Right ventricle myocardium superior (tissue), 1 donor: ENCODE measurements at regions of chr12 and their contacts with region 1.

Region 1: GRCh38 chr12:48851883-48852733 is at the start of gene DDX23:
- DNase-seq: peak; percentile 97
- ATAC-seq: peak; percentile 99
- total RNA-seq, gene DDX23: 32.4 TPM

Region 2: DNA sequence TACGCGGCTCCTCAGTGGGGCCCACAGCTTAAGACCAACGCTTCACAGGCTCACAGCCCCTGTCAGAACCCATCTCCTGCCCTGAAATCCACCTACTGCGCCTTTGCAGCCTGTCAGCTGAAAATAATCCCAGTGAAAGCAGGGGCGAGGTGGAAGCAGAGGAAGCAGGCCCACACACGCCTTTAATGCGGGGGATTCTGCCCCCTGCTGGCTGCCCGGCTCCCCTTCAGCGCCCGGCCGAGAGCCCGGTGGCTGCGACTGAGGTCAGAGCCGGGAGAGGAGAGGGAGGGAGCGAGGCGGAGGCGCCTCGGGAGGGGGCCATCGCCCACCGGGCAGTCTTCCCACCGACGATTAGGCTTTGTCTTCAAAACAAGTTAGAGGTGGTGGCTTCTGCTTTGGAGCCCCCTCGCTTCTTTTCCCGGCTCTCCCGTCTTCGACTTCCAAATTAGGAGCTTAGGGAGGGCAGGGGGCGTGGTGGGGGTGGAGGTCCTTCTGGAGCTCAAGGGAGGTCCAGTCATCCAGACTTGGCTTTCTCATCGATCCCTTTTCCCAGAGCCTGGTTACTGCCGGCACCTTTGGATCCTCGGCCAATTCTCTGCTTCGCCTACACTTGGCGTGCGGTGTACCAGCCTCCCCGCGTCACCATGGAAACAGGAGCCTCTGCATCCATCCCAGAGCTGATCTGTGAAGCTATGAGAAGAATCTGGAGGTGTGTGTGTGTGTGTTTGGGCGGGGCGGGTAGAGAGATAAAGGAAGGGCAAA is 38.7 kb after region 1 on chr12:
- intact Hi-C with region 1: loop called (anchors 2 kb)
- DNase-seq: peak; percentile 87
- ATAC-seq: peak; percentile 98

Region 3: DNA sequence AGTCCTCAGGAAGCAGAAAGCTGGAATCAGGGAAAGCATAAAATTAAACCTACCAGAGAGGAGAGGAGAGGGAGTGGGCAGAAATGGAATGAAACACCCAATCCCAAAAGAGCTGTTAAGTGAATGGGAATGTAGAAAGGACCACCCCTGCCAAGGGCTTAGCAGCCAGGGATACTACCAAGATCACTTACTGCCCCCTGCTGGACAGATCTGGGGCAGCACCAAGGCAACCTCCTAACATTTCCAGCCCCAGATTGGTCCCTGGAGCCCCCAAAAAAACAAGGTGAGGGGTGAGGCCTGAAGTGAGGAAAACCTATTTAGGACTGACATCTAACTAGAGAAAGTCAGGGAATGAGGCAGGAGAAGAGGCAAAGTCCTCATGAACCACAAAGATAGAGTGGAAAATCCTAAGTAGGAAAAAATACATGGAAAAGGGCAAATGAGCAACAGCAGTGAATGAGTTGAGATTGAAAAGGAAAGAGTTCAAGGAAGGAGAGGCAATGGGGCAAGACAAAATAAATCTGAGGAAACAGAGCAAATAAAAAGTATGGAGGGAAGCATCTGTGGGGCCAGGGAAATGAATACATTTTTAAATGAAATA is 84.4 kb after region 1 on chr12:
- intact Hi-C with region 1: loop called (anchors 10 kb)
- DNase-seq: peak; percentile 80
- ATAC-seq: peak; percentile 70

Region 4: DNA sequence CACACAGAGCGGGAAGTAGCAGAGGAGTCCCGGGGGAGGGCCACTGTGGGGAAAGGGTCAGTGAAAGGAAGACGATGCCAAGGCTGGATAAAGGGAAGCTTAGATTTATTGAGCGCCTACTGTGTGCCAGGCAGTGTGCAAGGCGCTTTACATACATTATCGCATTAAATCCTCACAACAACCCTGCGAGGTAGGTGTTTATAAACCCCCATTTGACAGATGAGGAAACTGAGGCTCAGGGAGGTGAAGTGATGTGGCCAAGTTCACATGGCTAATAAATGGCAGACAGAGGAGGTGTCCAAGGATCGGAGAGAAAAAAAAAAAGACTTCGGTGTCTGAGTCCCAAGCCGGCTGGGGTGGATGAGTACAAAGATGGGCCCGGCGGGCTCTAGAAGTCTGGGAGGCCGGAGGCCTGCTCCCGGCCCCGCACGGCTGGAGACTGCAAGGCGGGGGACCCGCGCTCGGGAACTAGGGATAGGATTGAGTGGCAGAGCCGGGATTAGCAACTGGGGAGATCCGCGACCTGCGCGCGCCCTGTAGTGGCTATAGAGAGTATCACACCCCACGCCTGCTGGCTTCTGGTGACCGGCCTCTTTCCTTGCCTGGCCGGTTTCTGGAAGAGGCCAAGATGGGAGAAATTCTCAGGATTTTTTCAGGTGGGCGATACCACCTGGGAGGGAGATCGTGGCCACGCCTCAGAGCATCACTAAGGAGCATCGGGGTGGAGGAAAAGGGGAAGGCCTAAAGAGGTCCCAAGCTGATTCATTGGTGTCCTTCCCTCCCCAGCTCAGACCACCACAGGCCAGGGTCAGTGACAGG is 143.2 kb after region 1 on chr12:
- intact Hi-C with region 1: loop called (anchors 5 kb)
- DNase-seq: peak; percentile 89
- ATAC-seq: peak; percentile 86